Activated CD4-positive, alpha-beta T cell treated with anti-CD3 and anti-CD28 coated beads for 36 hours (primary cell): ENCODE measurements at regions of chr10 and their contacts with region 1.

Region 1: GRCh38 chr10:132654702-132655661 is 117.4 kb downstream of the INPP5A start:
- DNase-seq: peak; percentile 77
- ATAC-seq: peak; percentile 76
- H3K4me3 Mint-ChIP-seq: no peak overlapping the region
- H3K27ac Mint-ChIP-seq: no peak overlapping the region
- H3K4me1 Mint-ChIP-seq: peaks cover 2% of the 10 kb centered on the region
- H3K27me3 Mint-ChIP-seq: no peaks in the 10 kb centered on the region

Region 2: DNA sequence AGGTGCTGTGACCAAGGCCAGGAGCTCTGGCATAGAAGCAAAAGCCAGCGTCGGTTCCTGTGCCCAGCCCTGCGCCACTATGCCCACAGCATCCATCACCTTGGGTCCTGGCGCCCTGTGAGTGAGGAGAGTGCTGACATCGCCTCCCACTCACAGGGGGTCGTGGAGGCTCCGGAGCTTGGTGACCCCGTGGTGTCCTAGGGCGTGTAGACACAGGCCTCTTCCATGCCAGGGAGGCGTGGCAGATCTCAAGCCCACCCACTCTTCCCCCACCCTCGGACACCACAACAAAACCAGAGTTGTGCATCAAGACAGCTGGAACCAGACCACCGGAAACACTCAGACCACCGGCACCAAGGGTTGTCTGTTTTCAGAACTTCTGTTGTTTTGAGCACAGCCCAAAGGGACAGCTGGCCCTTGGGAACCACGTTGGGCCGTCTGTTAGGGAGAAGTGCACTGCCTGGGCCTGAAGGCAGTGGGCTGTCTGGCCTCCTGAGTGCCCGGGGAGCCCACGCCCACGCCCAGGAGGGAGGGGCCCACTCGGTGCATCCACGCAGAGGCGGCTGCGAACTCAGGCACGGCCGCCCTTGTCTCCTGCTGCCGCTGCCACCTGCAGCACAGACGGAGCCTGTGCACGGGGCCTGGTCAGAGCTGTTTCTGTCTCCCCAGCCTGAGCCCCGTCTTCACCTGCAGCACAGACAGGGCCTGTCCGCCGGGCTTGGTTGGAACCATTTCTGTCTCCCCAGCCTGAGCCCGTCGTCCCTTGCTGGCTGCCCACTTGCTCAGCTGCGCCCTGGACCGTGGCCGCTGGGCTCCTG is 11.1 kb before region 1 on chr10:
- CTCF ChIA-PET with region 1: interaction called, 19 read pairs
- POLR2A ChIA-PET with region 1: no interaction called
- intact Hi-C with region 1: no loop called
- DNase-seq: no peak
- ATAC-seq: no peak
- H3K4me3 Mint-ChIP-seq: no peak overlapping the region
- H3K27ac Mint-ChIP-seq: no peak overlapping the region
- H3K4me1 Mint-ChIP-seq: peaks cover 2% of the 10 kb centered on the region
- H3K27me3 Mint-ChIP-seq: no peaks in the 10 kb centered on the region

Region 3: GRCh38 chr10:132788180-132788830 is 133.3 kb after region 1 on chr10:
- CTCF ChIA-PET with region 1: interaction called, 4 read pairs
- POLR2A ChIA-PET with region 1: no interaction called
- intact Hi-C with region 1: loop called (anchors 2 to 10 kb)
- DNase-seq: peak; percentile 26
- ATAC-seq: no peak
- H3K4me3 Mint-ChIP-seq: no peak overlapping the region
- H3K27ac Mint-ChIP-seq: no peak overlapping the region
- H3K4me1 Mint-ChIP-seq: no peaks in the 10 kb centered on the region
- H3K27me3 Mint-ChIP-seq: peaks cover 17% of the 10 kb centered on the region

Region 4: GRCh38 chr10:132793871-132794849 is 139.2 kb after region 1 on chr10:
- CTCF ChIA-PET with region 1: interaction called, 4 read pairs
- POLR2A ChIA-PET with region 1: no interaction called
- intact Hi-C with region 1: loop called (anchors 1 to 10 kb)
- DNase-seq: no peak
- ATAC-seq: no peak
- H3K4me3 Mint-ChIP-seq: no peak overlapping the region
- H3K27ac Mint-ChIP-seq: no peak overlapping the region
- H3K4me1 Mint-ChIP-seq: no peaks in the 10 kb centered on the region
- H3K27me3 Mint-ChIP-seq: peaks cover 8% of the 10 kb centered on the region

Region 5: GRCh38 chr10:132836832-132837540 is 182.0 kb after region 1 on chr10:
- CTCF ChIA-PET with region 1: no interaction called
- POLR2A ChIA-PET with region 1: no interaction called
- intact Hi-C with region 1: loop called in 1 of 2 experiments (anchors 1 kb)
- DNase-seq: peak; percentile 68
- ATAC-seq: peak; percentile 60
- H3K4me3 Mint-ChIP-seq: no peak overlapping the region
- H3K27ac Mint-ChIP-seq: no peak overlapping the region
- H3K4me1 Mint-ChIP-seq: no peaks in the 10 kb centered on the region
- H3K27me3 Mint-ChIP-seq: peaks cover 2% of the 10 kb centered on the region

Region 6: GRCh38 chr10:132892004-132892403 is 237.0 kb after region 1 on chr10:
- CTCF ChIA-PET with region 1: interaction called, 4 read pairs
- POLR2A ChIA-PET with region 1: no interaction called
- intact Hi-C with region 1: loop called in 1 of 2 experiments (anchors 10 kb)
- DNase-seq: no peak
- ATAC-seq: no peak
- H3K4me3 Mint-ChIP-seq: no peak overlapping the region
- H3K27ac Mint-ChIP-seq: no peak overlapping the region
- H3K4me1 Mint-ChIP-seq: no peaks in the 10 kb centered on the region
- H3K27me3 Mint-ChIP-seq: peaks cover 16% of the 10 kb centered on the region

Region 7: DNA sequence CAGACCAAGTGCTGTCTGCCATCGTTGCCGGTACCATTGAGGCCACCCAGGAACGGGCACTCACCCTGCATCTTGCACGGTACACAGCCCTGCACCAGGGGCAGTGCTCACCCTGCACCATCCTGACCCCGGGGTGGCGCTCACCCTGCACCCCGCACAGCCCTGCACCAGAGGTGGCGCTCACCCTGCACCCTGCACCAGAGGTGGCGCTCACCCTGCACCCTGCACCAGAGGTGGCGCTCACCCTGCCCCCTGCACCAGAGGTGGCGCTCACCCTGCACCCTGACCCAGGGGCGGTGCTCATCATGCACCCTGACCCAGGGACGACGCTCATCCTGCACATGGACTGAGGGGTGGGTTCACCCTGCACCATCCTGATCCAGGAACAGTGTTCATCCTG is 647.2 kb after region 1 on chr10:
- CTCF ChIA-PET with region 1: no interaction called
- POLR2A ChIA-PET with region 1: no interaction called
- intact Hi-C with region 1: no loop called
- DNase-seq: no peak
- ATAC-seq: no peak
- H3K4me3 Mint-ChIP-seq: no peak overlapping the region
- H3K27ac Mint-ChIP-seq: no peak overlapping the region
- H3K4me1 Mint-ChIP-seq: peaks cover 25% of the 10 kb centered on the region
- H3K27me3 Mint-ChIP-seq: no peaks in the 10 kb centered on the region